ENCODE measurements at regions of chr1 and their contacts with region 1.

Region 1: DNA sequence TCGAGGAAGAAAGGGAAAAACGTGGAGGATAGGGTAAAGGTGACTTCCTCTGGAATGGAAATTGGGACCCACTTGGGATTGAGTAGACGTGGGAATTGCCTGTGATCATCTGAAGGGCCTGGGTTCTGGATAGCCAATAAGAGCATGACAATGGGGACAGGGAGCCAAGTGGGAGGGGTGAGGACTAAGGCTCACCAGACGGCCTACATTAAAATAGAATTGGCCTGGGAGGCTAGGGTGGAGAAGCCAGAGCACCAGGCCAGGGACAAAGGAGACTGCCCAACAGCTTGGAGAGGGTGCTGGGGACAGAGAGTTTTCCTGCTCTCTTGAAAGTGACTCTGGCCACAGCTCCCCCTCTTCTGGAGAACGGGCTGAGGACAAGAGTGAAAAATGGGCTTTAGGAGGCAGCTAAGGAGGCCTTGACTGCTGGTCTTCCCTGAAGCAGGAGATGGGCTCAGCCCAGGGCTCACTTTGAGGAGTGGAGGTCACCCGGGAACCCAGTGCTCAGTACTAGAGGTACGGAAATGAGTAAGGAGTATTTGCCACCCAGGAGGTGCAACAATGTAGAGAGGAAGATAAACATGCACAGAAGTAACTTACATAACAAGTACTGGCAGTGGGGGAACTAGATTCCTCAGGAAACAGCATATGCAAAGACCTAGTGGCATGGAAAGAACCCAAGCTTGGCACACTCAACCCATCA is 18.8 kb downstream of the INKA2 start:
- DNase-seq: no peak
- H3K4me3 ChIP-seq: no peak overlapping the region
- H3K27ac ChIP-seq: no peak overlapping the region
- H3K4me1 ChIP-seq: peaks cover 16% of the 10 kb centered on the region
- H3K27me3 ChIP-seq: no peaks in the 10 kb centered on the region
- CTCF ChIP-seq: no peak

Region 2: GRCh38 chr1:111148376-111148881 is 572.0 kb before region 1 on chr1:
- CTCF ChIA-PET with region 1: no interaction called
- POLR2A ChIA-PET with region 1: no interaction called
- intact Hi-C with region 1: no loop called
- DNase-seq: no peak
- H3K4me3 ChIP-seq: no peak overlapping the region
- H3K27ac ChIP-seq: no peak overlapping the region
- H3K4me1 ChIP-seq: no peaks in the 10 kb centered on the region
- H3K27me3 ChIP-seq: no peaks in the 10 kb centered on the region
- CTCF ChIP-seq: no peak

Region 3: GRCh38 chr1:111517469-111518225 is 202.8 kb before region 1 on chr1:
- CTCF ChIA-PET with region 1: no interaction called
- POLR2A ChIA-PET with region 1: no interaction called
- intact Hi-C with region 1: no loop called
- DNase-seq: no peak
- H3K4me3 ChIP-seq: no peak overlapping the region
- H3K27ac ChIP-seq: no peak overlapping the region
- H3K4me1 ChIP-seq: no peaks in the 10 kb centered on the region
- H3K27me3 ChIP-seq: no peaks in the 10 kb centered on the region
- CTCF ChIP-seq: no peak

Region 4: GRCh38 chr1:111747282-111747734 is 26.9 kb after region 1 on chr1:
- CTCF ChIA-PET with region 1: interaction called, 11 read pairs
- POLR2A ChIA-PET with region 1: no interaction called
- intact Hi-C with region 1: loop called (anchors 1 kb)
- DNase-seq: peak; percentile 44 to 75
- H3K4me3 ChIP-seq: no peak overlapping the region
- H3K27ac ChIP-seq: no peak overlapping the region
- H3K4me1 ChIP-seq: no peaks in the 10 kb centered on the region
- H3K27me3 ChIP-seq: peaks cover 27% of the 10 kb centered on the region; the same call in 1 of the 2 replicates
- CTCF ChIP-seq: peak; percentile 85